ENCODE measurements at regions of chr12 and their contacts with region 1.

Region 1: GRCh38 chr12:66717036-66717673 is 38.3 kb upstream of the GRIP1 start:
- DNase-seq: no peak
- H3K4me3 ChIP-seq: no peak overlapping the region
- H3K27ac ChIP-seq: no peak overlapping the region
- H3K4me1 ChIP-seq: no peaks in the 10 kb centered on the region
- H3K27me3 ChIP-seq: no peaks in the 10 kb centered on the region
- CTCF ChIP-seq: peak in 1 of 2 donors; percentile 18

Region 2: GRCh38 chr12:66119870-66120241 is 597.3 kb before region 1 on chr12:
- CTCF ChIA-PET with region 1: no interaction called
- dilution Hi-C with region 1: no loop called
- in situ Hi-C with region 1: no loop called
- intact Hi-C with region 1: no loop called
- DNase-seq: no peak
- H3K4me3 ChIP-seq: no peak overlapping the region
- H3K27ac ChIP-seq: no peak overlapping the region
- H3K4me1 ChIP-seq: no peaks in the 10 kb centered on the region
- H3K27me3 ChIP-seq: no peaks in the 10 kb centered on the region
- CTCF ChIP-seq: no peak

Region 3: DNA sequence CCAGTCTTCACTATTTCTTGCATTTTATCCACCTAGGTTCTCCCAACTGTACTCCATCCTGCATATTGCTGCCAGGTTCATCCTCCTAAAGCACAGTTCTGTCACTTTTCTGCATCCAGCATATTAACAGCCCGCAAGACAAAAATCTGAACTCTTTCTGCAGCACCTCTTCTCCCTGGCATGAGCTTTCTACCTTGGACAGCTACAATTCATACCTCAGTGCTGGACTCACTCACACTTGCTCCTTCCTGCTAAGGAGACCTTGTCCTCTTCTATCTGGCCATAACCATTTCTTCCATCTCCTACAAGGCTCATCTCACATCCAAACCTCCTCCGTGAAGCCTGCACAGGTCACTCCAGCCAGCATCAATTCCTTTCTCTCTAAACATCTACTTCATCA is 131.8 kb after region 1 on chr12:
- CTCF ChIA-PET with region 1: no interaction called
- dilution Hi-C with region 1: no loop called
- in situ Hi-C with region 1: no loop called
- intact Hi-C with region 1: loop called (anchors 5 kb)
- DNase-seq: no peak
- H3K4me3 ChIP-seq: no peak overlapping the region
- H3K27ac ChIP-seq: no peak overlapping the region
- H3K4me1 ChIP-seq: no peaks in the 10 kb centered on the region
- H3K27me3 ChIP-seq: no peaks in the 10 kb centered on the region
- CTCF ChIP-seq: no peak

Region 4: GRCh38 chr12:66860752-66861750 is 143.9 kb after region 1 on chr12:
- CTCF ChIA-PET with region 1: no interaction called
- dilution Hi-C with region 1: no loop called
- in situ Hi-C with region 1: no loop called
- intact Hi-C with region 1: loop called (anchors 2 kb)
- DNase-seq: peak; percentile 33
- H3K4me3 ChIP-seq: no peak overlapping the region
- H3K27ac ChIP-seq: no peak overlapping the region
- H3K4me1 ChIP-seq: peaks cover 4% of the 10 kb centered on the region
- H3K27me3 ChIP-seq: no peaks in the 10 kb centered on the region
- CTCF ChIP-seq: peak; percentile 94 to 97

Measured in mammary epithelial cell (primary cell).